Dorsolateral prefrontal cortex (tissue), 120 donors: ENCODE measurements at regions of chr6 and their contacts with region 1.

Region 1: GRCh38 chr6:142692942-142693341 is 252.0 kb downstream of the HIVEP2 start:
- DNase-seq: peak in 9 of 10 donors; percentile 51 to 73 (median 61)
- H3K4me3 ChIP-seq: peak overlapping the region in 1 of 59 donors; percentile 2
- H3K27ac ChIP-seq: peak overlapping the region in 1 of 59 donors; percentile 9
- H3K27me3 ChIP-seq: no peaks in the 10 kb centered on the region
- CTCF ChIP-seq: peak; percentile 78 to 99 (median 95)

Region 2: DNA sequence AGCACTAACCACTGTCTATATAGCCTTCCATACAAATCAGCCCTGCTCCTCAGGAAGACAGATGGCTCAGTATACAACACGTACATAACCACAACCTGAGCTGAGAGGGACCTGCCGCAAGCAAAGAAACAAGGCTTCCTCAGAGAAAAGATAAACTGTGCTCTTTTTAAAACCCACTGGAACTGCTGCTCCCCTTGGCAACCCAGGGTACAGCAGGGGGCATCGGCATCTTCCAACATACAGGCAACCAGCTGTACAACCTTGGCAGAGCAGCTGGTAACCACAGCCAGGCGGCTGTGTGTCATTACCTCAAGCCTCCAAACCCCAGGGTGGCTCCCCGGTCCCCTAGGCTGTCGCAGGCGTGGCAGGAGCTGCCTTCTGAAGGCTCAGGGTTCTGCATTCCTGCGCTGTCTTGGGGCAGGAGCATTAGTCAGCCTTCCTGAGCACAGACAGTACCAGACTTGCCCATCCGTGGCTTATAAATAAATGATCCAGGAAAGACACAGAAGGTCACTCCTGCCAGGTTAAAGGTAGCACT is 141.6 kb before region 1 on chr6:
- intact Hi-C with region 1: no loop called
- DNase-seq: peak in 1 of 10 donors; percentile 9
- H3K4me3 ChIP-seq: no peak overlapping the region
- H3K27ac ChIP-seq: no peak overlapping the region
- H3K27me3 ChIP-seq: peaks cover 0 to 23% (median 0%) of the 10 kb centered on the region in 45 donors
- CTCF ChIP-seq: no peak

Region 3: GRCh38 chr6:142845624-142846458 is 152.9 kb after region 1 on chr6:
- intact Hi-C with region 1: loop called in 1 of 2 experiments (anchors 10 kb)
- DNase-seq: peak; percentile 64 to 89 (median 76)
- H3K4me3 ChIP-seq: peak overlapping the region; percentile 4 to 69 (median 49)
- H3K27ac ChIP-seq: peak overlapping the region in 57 of 59 donors; percentile 16 to 89 (median 81)
- H3K27me3 ChIP-seq: no peaks in the 10 kb centered on the region
- CTCF ChIP-seq: peak in 29 of 56 donors; percentile 7 to 46 (median 24)

Region 4: DNA sequence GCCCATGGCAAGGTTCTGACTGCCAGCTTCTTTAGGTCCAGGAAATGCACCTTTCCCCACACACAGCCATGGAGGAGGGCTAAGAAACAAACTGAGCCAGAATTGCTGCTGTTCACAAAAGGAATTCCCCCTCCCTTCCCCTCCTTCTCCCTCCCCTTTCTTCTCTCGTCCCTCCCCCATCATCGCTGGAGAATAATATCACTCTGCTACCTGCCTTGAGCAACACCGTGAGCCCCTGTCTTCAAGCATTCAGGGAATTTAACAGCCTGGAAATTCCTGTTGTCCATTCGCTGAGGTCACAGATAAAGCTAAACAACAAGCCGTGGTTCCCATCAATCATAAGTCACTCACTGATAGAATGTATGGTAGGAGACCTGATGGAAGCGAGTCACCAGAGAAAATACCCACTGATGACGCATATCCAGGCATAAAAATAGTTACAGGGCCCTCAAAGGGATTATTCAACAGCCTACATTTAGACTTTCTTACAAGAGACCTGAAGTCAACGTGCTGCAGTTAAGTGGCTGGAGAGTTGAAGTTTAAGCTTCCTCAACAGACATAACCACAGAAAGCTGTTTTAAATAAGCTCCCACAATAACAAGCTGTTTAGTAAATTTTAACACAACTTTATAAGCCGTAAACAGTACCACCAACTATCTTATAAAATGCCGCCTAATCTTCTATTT is 192.4 kb after region 1 on chr6:
- intact Hi-C with region 1: loop called in 1 of 2 experiments (anchors 5 kb)
- DNase-seq: no peak
- H3K4me3 ChIP-seq: peak overlapping the region in 58 of 59 donors; percentile 3 to 61 (median 48)
- H3K27ac ChIP-seq: peak overlapping the region in 50 of 59 donors; percentile 2 to 82 (median 54)
- H3K27me3 ChIP-seq: no peaks in the 10 kb centered on the region
- CTCF ChIP-seq: no peak

Region 5: GRCh38 chr6:143015300-143015706 is 322.4 kb after region 1 on chr6:
- intact Hi-C with region 1: loop called in 1 of 2 experiments (anchors 5 kb)
- DNase-seq: no peak
- H3K4me3 ChIP-seq: no peak overlapping the region
- H3K27ac ChIP-seq: no peak overlapping the region
- H3K27me3 ChIP-seq: no peaks in the 10 kb centered on the region
- CTCF ChIP-seq: peak in 15 of 56 donors; percentile 7 to 56 (median 25)

Region 6: GRCh38 chr6:143026696-143027449 is 333.9 kb after region 1 on chr6:
- intact Hi-C with region 1: loop called in 1 of 2 experiments (anchors 5 kb)
- DNase-seq: peak in 1 of 10 donors; percentile 52
- H3K4me3 ChIP-seq: no peak overlapping the region
- H3K27ac ChIP-seq: no peak overlapping the region
- H3K27me3 ChIP-seq: no peaks in the 10 kb centered on the region
- CTCF ChIP-seq: peak; percentile 11 to 80 (median 58)

Region 7: DNA sequence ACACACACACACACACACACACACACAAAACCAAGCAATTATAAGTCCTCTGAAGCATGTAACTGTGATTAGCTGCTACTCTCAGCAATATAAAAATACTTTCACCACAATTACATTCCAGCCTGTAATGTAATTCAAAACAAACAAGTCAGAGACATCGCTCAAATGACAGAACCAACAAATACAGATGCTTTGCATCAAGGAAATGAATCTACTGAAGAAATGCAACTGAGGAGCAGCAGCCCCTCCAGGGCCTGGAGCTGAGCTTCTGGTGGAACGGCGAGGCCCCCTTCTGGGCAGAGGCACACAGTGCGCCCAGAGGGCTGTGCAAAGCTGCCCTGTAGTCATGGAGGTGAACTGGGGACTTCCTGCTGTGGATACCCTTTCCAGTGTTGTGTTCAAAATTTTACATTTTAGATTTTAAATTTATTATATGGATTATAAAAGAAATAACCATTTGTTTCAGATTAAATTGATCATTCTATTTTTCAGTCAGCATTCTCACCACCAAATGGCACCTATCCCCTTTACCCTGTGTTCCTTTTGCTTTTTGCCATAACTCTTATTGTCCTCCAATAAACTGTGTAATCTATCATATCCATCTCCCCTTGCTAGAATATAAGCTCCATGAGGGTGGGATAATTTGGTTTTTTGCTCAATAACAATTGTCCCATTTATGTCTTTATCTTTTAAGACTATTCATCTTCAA is 734.3 kb after region 1 on chr6:
- intact Hi-C with region 1: loop called (anchors 2 to 5 kb)
- DNase-seq: peak; percentile 59 to 84 (median 75)
- H3K4me3 ChIP-seq: no peak overlapping the region
- H3K27ac ChIP-seq: no peak overlapping the region
- H3K27me3 ChIP-seq: no peaks in the 10 kb centered on the region
- CTCF ChIP-seq: peak; percentile 56 to 97 (median 90)